Motor neuron (in vitro differentiated cells): ENCODE measurements at regions of chrX and their contacts with region 1.

Region 1: GRCh38 chrX:68196939-68197791 is 236.1 kb downstream of the OPHN1 start:
- ATAC-seq: peak in 7 of 8 experiments; percentile 46 to 76 (median 54)
- H3K4me3 ChIP-seq: no peak overlapping the region
- H3K27ac ChIP-seq: no peak overlapping the region
- H3K4me1 ChIP-seq: no peaks in the 10 kb centered on the region

Region 2: DNA sequence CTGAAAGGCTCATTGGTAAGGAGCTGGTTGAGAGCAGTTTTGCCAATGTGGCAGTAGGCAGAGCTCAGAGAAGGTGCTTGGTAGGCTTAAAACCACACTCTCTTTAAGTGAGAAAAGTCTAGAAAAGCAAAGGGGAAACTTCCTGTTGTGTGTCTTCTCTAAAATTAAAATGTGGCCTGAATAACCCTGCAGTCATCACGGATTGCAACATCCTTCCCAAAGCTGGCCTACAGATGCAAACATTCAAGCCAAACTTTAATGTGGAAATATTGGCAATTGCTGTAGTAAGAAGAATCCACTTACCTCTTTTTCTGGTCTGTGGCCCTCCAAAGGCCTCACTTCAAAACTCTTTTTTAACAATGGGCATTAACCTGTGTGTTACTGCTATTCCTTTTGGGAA is 112.4 kb before region 1 on chrX:
- in situ Hi-C with region 1: no loop called
- ATAC-seq: peak in 2 of 8 experiments; percentile 53 to 54
- H3K4me3 ChIP-seq: no peak overlapping the region
- H3K27ac ChIP-seq: no peak overlapping the region
- H3K4me1 ChIP-seq: no peaks in the 10 kb centered on the region

Region 3: GRCh38 chrX:68462653-68463052 is 265.5 kb after region 1 on chrX:
- in situ Hi-C with region 1: loop called in 3 of 9 experiments (anchors 25 kb)
- ATAC-seq: peak in 3 of 8 experiments; percentile 7 to 62 (median 27)
- H3K4me3 ChIP-seq: no peak overlapping the region
- H3K27ac ChIP-seq: no peak overlapping the region
- H3K4me1 ChIP-seq: no peaks in the 10 kb centered on the region

Region 4: GRCh38 chrX:68532831-68533533 is 335.8 kb after region 1 on chrX:
- in situ Hi-C with region 1: no loop called
- ATAC-seq: no peak
- H3K4me3 ChIP-seq: no peak overlapping the region
- H3K27ac ChIP-seq: no peak overlapping the region
- H3K4me1 ChIP-seq: no peaks in the 10 kb centered on the region